Esophagus squamous epithelium (tissue), 5 donors: ENCODE measurements at regions of chr12 and their contacts with region 1.

Region 1: GRCh38 chr12:108562348-108563135 is at the start of gene ISCU:
- DNase-seq: peak; percentile 75
- H3K4me3 ChIP-seq: peak within 1 kb of the TSS; percentile 82 to 94 (median 93)
- H3K27ac ChIP-seq: peak within 1 kb of the TSS; percentile 95 to 98 (median 96)
- H3K4me1 ChIP-seq: peaks cover 28 to 81% (median 40%) of the 10 kb centered on the region in 3 donors
- H3K27me3 ChIP-seq: no peaks in the 10 kb centered on the region
- CTCF ChIP-seq: no peak
- POLR2A ChIP-seq: peak in 2 of 4 donors; percentile 94 to 99
- total RNA-seq, gene ISCU: 50.7 to 132 (median 85.3) TPM

Region 2: GRCh38 chr12:108618079-108618952 is 55.8 kb after region 1 on chr12:
- intact Hi-C with region 1: loop called (anchors 5 kb)
- DNase-seq: no peak
- H3K4me3 ChIP-seq: no peak overlapping the region
- H3K27ac ChIP-seq: no peak overlapping the region
- H3K4me1 ChIP-seq: peaks cover 0 to 41% (median 10%) of the 10 kb centered on the region in 3 donors
- H3K27me3 ChIP-seq: no peaks in the 10 kb centered on the region
- CTCF ChIP-seq: peak; percentile 88 to 98 (median 94)
- POLR2A ChIP-seq: no peak

Region 3: GRCh38 chr12:109093022-109093918 is 530.7 kb after region 1 on chr12 and contains the start of gene ALKBH2:
- intact Hi-C with region 1: loop called (anchors 10 kb)
- DNase-seq: peak; percentile 69
- H3K4me3 ChIP-seq: peak within 1 kb of the TSS; percentile 41 to 70 (median 54)
- H3K27ac ChIP-seq: peak within 1 kb of the TSS; percentile 73 to 83 (median 77)
- H3K4me1 ChIP-seq: peaks cover 23 to 47% (median 33%) of the 10 kb centered on the region in 3 donors
- H3K27me3 ChIP-seq: no peaks in the 10 kb centered on the region
- CTCF ChIP-seq: peak; percentile 97 to 99 (median 99)
- POLR2A ChIP-seq: peak in 1 of 4 donors; percentile 49
- total RNA-seq, gene ALKBH2: 7.9 to 20.6 (median 14.8) TPM